ENCODE measurements at regions of chr2 and their contacts with region 1.

Region 1: DNA sequence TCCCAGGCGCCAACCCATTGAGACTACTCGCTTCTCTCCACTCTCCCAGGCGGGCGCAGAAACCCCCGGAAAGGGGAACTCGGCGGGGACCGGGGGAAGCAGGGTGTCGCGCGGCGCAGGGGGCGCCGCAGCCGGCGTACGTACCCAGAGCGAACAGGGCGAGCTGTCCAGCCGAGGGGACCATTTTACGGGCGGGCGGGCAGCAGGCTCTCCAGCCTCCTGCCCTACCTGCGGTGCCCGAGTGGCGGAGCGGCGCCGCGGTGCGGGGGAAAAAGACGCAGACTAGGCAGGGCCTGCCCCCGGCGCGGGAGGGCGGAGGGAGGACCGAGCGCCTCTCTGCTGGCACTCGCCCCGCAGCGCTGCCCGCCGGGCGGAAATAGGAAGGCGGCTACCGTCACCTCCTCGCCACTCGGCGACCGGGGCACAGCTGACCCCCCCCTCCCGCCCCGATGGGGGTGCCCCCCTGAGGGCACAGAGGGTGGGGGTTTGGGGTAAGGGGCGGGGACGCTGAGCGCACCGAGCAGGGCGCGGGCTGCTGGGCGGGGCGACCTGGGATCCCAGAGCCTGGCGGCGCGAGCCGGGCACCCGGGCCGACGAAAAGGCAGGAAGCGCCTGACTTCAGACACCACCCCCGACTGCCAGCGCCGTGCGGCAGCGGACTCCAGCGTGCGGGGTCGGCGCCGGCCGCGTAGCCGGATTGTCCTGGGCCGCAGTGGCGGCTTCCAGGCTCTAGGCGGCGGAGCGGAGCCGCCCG is at the start of gene TGFA:
- DNase-seq: peak; percentile 82
- ATAC-seq: peak; percentile 91
- H3K4me3 Mint-ChIP-seq: peak within 1 kb of the TSS; percentile 75
- H3K27ac Mint-ChIP-seq: peak within 1 kb of the TSS; percentile 24
- H3K4me1 Mint-ChIP-seq: peaks cover 24% of the 10 kb centered on the region
- H3K27me3 Mint-ChIP-seq: peaks cover 25% of the 10 kb centered on the region
- total RNA-seq, gene TGFA: 0.07 to 0.18 TPM

Region 2: DNA sequence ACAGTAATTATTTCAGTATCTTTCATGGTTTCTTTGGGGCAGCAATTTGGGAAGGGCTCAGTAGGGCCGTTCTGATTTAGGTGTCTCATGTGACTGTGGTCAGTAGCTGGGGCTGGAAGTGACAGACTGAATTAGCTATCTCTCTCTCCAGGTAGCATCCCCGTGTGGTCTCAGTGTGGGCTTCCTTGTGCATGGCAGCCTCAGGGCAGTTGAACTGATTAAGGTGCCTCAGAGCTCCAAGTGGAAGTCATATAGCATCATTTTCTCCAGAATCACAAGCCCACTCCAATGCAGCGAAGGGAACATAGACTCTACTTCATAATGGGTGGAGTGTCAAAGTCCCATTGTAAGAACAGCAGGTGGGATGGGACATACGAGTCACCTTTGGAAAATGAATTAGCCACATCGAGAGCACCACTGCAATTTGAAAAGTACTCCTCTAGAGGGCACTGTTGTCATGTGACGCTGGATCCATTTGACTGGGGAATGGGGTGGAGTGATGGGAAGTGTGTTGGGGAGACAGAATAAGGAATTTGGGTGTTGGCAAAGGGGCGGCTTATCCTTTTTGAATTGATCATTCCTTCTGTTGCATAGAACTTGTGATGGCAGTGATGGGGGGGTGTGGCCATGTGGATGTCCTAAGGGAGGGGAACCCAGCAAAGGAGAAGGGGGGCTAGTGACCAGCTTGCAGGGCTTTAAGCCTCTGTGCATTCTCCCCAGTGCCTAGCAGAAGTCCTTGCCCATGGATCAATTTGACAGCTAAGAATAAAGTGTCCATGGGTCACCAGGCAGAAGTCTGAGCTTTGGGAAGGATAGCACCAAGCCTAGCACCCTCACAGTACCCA is 212.6 kb before region 1 on chr2:
- CTCF ChIA-PET with region 1: interaction called, 5 read pairs
- POLR2A ChIA-PET with region 1: no interaction called
- intact Hi-C with region 1: loop called (anchors 2 to 10 kb)
- DNase-seq: peak; percentile 49
- ATAC-seq: peak; percentile 66
- H3K4me3 Mint-ChIP-seq: no peak overlapping the region
- H3K27ac Mint-ChIP-seq: no peak overlapping the region
- H3K4me1 Mint-ChIP-seq: peaks cover 2% of the 10 kb centered on the region
- H3K27me3 Mint-ChIP-seq: no peaks in the 10 kb centered on the region

Region 3: GRCh38 chr2:70603066-70603465 is 49.3 kb after region 1 on chr2:
- CTCF ChIA-PET with region 1: no interaction called
- POLR2A ChIA-PET with region 1: no interaction called
- intact Hi-C with region 1: loop called in 1 of 2 experiments (anchors 1 kb)
- DNase-seq: no peak
- ATAC-seq: no peak
- H3K4me3 Mint-ChIP-seq: no peak overlapping the region
- H3K27ac Mint-ChIP-seq: no peak overlapping the region
- H3K4me1 Mint-ChIP-seq: peaks cover 9% of the 10 kb centered on the region
- H3K27me3 Mint-ChIP-seq: peaks cover 2% of the 10 kb centered on the region

Region 4: DNA sequence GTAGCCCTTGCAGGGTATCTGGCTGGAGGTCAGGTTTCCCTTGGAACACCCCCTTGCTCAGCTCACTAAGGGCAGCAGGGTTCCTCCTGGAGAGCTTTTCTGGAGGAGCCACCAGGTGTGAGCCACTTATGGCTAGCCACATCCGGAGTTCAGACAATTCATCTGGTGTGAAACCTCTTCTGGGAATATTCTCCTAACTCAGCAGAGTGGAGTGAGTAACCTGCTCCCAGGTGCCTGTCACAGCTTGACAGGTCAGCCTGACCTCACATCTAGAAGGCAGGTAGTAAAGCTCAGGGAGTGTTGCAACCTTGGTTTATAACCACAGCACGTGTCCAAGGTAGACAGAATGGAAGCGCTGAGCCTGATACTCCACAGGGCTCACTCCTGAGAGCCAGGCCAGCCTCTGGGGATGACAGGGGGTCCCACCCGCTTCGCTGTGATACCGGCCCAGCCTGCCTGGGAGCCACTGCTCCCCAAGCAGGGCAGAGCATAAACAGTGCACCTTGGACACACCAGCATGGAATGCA is 62.5 kb after region 1 on chr2:
- CTCF ChIA-PET with region 1: interaction called, 9 read pairs
- POLR2A ChIA-PET with region 1: no interaction called
- intact Hi-C with region 1: loop called (anchors 1 to 2 kb)
- DNase-seq: no peak
- ATAC-seq: no peak
- H3K4me3 Mint-ChIP-seq: no peak overlapping the region
- H3K27ac Mint-ChIP-seq: no peak overlapping the region
- H3K4me1 Mint-ChIP-seq: no peaks in the 10 kb centered on the region
- H3K27me3 Mint-ChIP-seq: peaks cover 2% of the 10 kb centered on the region

Region 5: GRCh38 chr2:70647873-70648481 is 94.2 kb after region 1 on chr2:
- CTCF ChIA-PET with region 1: no interaction called
- POLR2A ChIA-PET with region 1: no interaction called
- intact Hi-C with region 1: loop called in 1 of 2 experiments (anchors 5 kb)
- DNase-seq: peak; percentile 87
- ATAC-seq: peak; percentile 88
- H3K4me3 Mint-ChIP-seq: no peak overlapping the region
- H3K27ac Mint-ChIP-seq: no peak overlapping the region
- H3K4me1 Mint-ChIP-seq: peaks cover 4% of the 10 kb centered on the region
- H3K27me3 Mint-ChIP-seq: no peaks in the 10 kb centered on the region

Region 6: GRCh38 chr2:70767699-70768589 is 214.2 kb after region 1 on chr2 and contains the start of gene ADD2:
- CTCF ChIA-PET with region 1: no interaction called
- POLR2A ChIA-PET with region 1: no interaction called
- intact Hi-C with region 1: loop called in 1 of 2 experiments (anchors 5 kb)
- DNase-seq: peak; percentile 85
- ATAC-seq: peak; percentile 90
- H3K4me3 Mint-ChIP-seq: peak within 1 kb of the TSS; percentile 84
- H3K27ac Mint-ChIP-seq: peak within 1 kb of the TSS; percentile 88
- H3K4me1 Mint-ChIP-seq: peaks cover 18% of the 10 kb centered on the region
- H3K27me3 Mint-ChIP-seq: peaks cover 26% of the 10 kb centered on the region
- total RNA-seq, gene ADD2: 26.9 to 31.5 TPM

Measured in activated CD4-positive, alpha-beta T cell treated with anti-CD3 and anti-CD28 coated beads for 36 hours (primary cell).